ENCODE measurements at regions of chr12 and their contacts with region 1.

Region 1: DNA sequence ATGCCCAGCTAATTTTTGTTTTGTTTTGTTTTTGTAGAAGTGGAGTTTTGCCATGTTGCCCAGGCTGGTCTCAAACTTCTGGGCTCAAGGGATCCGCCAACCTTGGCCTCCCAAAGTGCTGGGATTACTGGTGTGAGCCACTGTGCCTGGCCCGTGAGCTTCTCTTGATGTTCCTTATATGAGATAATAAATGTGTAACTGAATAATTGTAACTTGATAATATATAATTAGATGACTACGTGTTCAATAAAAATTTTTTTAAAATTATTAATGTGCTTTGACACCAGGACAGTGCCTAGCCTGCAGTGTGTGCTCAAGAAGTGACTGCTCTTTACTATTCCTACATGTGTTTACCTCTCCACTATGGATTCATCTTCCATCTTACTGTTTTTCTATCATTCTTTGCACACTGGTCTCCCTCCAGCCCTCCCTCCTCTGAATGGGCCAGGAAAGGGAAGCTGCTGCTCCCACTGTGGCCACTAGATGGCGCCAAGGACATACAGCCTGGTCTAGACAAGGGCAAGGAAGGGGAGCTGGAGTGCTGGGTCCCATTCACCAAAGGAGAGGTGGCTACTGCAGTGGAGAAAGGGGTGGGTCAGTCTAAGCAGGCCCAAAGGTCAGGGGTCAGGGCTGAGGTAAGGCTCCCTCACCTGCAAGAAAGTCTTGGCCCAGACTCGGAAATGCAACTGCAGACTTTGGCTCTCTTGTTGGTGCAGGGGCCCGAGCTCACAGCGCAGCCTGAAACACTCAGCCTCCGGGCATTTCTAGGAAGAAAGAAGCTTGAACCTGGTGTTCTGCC is 14.7 kb upstream of the ZNF385A start:
- DNase-seq: peak; percentile 80 to 93 (median 88)
- ATAC-seq: peak; percentile 98
- H3K4me3 ChIP-seq: no peak overlapping the region
- H3K4me3 Mint-ChIP-seq: no peak overlapping the region
- H3K27ac ChIP-seq: no peak overlapping the region
- H3K27ac Mint-ChIP-seq: peak overlapping the region; percentile 4
- H3K4me1 ChIP-seq: peaks cover 13% of the 10 kb centered on the region
- H3K4me1 Mint-ChIP-seq: peaks cover 18% of the 10 kb centered on the region
- H3K27me3 ChIP-seq: no peaks in the 10 kb centered on the region
- H3K27me3 Mint-ChIP-seq: no peaks in the 10 kb centered on the region
- CTCF ChIP-seq: peak; percentile 97

Region 2: GRCh38 chr12:54249489-54249888 is 149.7 kb before region 1 on chr12:
- CTCF ChIA-PET with region 1: no interaction called
- POLR2A ChIA-PET with region 1: no interaction called
- intact Hi-C with region 1: no loop called
- DNase-seq: no peak
- ATAC-seq: peak; percentile 37
- H3K4me3 ChIP-seq: no peak overlapping the region
- H3K4me3 Mint-ChIP-seq: no peak overlapping the region
- H3K27ac ChIP-seq: no peak overlapping the region
- H3K27ac Mint-ChIP-seq: peak overlapping the region; percentile 73
- H3K4me1 ChIP-seq: no peaks in the 10 kb centered on the region
- H3K4me1 Mint-ChIP-seq: peaks cover 18% of the 10 kb centered on the region
- H3K27me3 ChIP-seq: no peaks in the 10 kb centered on the region
- H3K27me3 Mint-ChIP-seq: no peaks in the 10 kb centered on the region
- CTCF ChIP-seq: no peak

Region 3: DNA sequence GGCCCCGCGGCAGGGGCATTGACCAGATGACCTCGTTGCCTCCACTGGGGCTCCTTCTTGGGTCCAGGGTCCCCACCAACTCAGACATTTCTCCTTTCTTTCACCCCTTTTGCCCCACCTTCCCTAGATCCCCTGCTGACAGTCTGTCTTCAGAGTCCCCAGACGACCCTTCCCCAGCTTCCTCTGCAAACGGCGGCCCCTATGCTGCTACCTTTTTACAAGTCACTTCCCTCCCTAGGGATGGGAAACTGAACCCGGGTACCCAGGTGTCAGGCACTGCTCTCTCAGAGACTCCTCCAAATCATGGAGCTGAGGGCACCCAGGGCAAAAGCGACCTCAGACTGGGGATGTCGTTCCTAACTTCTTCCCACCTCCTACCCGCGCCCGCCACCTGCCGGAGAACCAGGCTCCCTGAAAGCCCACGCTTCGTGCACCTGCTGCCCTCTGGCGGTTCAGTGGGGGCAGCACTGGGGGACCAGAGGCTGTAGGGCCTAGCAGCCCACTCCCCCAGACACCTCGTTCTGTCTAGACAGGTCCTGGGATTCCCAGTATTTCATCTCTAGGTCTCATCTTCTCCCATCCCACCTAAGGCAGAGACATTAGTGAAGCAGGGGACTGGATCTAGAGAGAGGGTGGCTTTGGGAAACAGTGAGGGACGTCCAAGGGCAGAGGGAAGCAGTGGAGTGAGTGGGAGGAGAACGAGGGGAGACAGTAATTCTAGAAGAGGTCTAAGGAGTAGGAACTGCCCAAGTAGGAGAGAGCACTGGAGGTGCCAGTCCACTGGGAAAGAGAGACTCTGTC is 19.6 kb before region 1 on chr12:
- CTCF ChIA-PET with region 1: interaction called, 18 read pairs
- POLR2A ChIA-PET with region 1: no interaction called
- intact Hi-C with region 1: no loop called
- DNase-seq: peak; percentile 82 to 93 (median 87)
- ATAC-seq: peak; percentile 99
- H3K4me3 ChIP-seq: peak overlapping the region; percentile 34
- H3K4me3 Mint-ChIP-seq: peak overlapping the region; percentile 2
- H3K27ac ChIP-seq: no peak overlapping the region
- H3K27ac Mint-ChIP-seq: no peak overlapping the region
- H3K4me1 ChIP-seq: peaks cover 7% of the 10 kb centered on the region
- H3K4me1 Mint-ChIP-seq: peaks cover 6% of the 10 kb centered on the region
- H3K27me3 ChIP-seq: no peaks in the 10 kb centered on the region
- H3K27me3 Mint-ChIP-seq: no peaks in the 10 kb centered on the region
- CTCF ChIP-seq: peak; percentile 100

Region 4: GRCh38 chr12:54411391-54412241 is 12.4 kb after region 1 on chr12:
- CTCF ChIA-PET with region 1: interaction called, 147 read pairs
- POLR2A ChIA-PET with region 1: interaction called, 52 read pairs
- intact Hi-C with region 1: loop called in 1 of 2 experiments (anchors 2 kb)
- DNase-seq: peak in 13 of 14 experiments; percentile 45 to 83 (median 68)
- ATAC-seq: peak; percentile 46
- H3K4me3 ChIP-seq: peak overlapping the region; percentile 50
- H3K4me3 Mint-ChIP-seq: peak overlapping the region; percentile 78
- H3K27ac ChIP-seq: peak overlapping the region; percentile 94 to 99
- H3K27ac Mint-ChIP-seq: peak overlapping the region; percentile 95
- H3K4me1 ChIP-seq: peaks cover 91% of the 10 kb centered on the region
- H3K4me1 Mint-ChIP-seq: peaks cover 79% of the 10 kb centered on the region
- H3K27me3 ChIP-seq: no peaks in the 10 kb centered on the region
- H3K27me3 Mint-ChIP-seq: no peaks in the 10 kb centered on the region
- CTCF ChIP-seq: no peak

Region 5: GRCh38 chr12:54419088-54419892 is 20.1 kb after region 1 on chr12 and contains the start of gene ITGA5:
- CTCF ChIA-PET with region 1: interaction called, 147 read pairs
- POLR2A ChIA-PET with region 1: interaction called, 52 read pairs
- intact Hi-C with region 1: no loop called
- DNase-seq: peak in 8 of 14 experiments; percentile 25 to 72 (median 55)
- ATAC-seq: peak; percentile 25
- H3K4me3 ChIP-seq: peak within 1 kb of the TSS; percentile 98
- H3K4me3 Mint-ChIP-seq: peak within 1 kb of the TSS; percentile 94
- H3K27ac ChIP-seq: peak within 1 kb of the TSS; percentile 90 to 94
- H3K27ac Mint-ChIP-seq: peak within 1 kb of the TSS; percentile 95
- H3K4me1 ChIP-seq: peaks cover 55% of the 10 kb centered on the region
- H3K4me1 Mint-ChIP-seq: peaks cover 54% of the 10 kb centered on the region
- H3K27me3 ChIP-seq: no peaks in the 10 kb centered on the region
- H3K27me3 Mint-ChIP-seq: no peaks in the 10 kb centered on the region
- CTCF ChIP-seq: no peak
- total RNA-seq, gene ITGA5: 143 to 159 TPM

Region 6: DNA sequence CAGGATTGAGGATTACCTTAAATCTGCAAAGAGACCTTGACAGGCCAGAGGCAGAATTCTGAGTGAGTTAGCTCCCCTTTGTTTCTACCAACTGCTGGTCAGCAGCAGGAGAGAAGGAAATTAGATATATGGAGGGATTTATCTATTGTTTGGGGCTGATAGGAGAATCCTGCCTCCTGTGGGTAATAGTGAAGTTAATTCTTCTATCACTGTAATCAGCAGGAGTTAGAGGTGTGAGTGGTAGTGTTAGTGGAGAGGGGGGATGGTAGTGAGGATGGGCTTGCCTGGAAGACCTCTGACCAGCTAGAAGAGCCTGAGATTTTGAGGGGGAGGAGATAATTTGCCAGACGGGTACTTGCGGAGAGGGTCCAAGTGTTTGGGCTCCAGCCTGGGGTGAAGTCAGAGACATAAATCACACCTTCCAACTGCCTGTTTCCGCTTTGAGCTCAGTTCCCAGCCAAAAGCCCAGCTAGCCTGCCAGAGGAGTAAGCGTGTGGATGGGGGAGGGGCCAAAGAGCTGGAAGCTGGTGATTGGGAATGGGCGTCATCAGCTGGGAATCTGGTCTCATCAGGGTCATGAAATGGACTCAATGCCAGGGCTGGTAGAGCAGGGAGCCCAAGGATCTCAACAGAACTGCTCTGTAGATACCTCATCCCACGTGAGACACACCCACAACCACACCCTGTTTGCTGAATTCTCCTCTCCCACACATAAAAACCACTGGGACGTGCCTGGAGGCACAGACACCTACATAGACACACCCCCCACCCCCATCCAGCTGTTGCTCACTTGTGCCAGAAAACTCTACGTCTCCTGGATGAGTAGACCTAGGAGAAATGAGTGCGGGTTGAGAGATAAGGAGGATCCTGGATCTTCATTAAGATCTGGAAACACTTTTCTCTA is 33.0 kb after region 1 on chr12:
- CTCF ChIA-PET with region 1: interaction called, 153 read pairs
- POLR2A ChIA-PET with region 1: interaction called, 61 read pairs
- intact Hi-C with region 1: no loop called
- DNase-seq: no peak
- ATAC-seq: no peak
- H3K4me3 ChIP-seq: no peak overlapping the region
- H3K4me3 Mint-ChIP-seq: no peak overlapping the region
- H3K27ac ChIP-seq: no peak overlapping the region
- H3K27ac Mint-ChIP-seq: no peak overlapping the region
- H3K4me1 ChIP-seq: peaks cover 37% of the 10 kb centered on the region
- H3K4me1 Mint-ChIP-seq: peaks cover 47% of the 10 kb centered on the region
- H3K27me3 ChIP-seq: no peaks in the 10 kb centered on the region
- H3K27me3 Mint-ChIP-seq: no peaks in the 10 kb centered on the region
- CTCF ChIP-seq: no peak

Region 7: GRCh38 chr12:54439521-54440255 is 40.5 kb after region 1 on chr12:
- CTCF ChIA-PET with region 1: interaction called, 153 read pairs
- POLR2A ChIA-PET with region 1: interaction called, 61 read pairs
- intact Hi-C with region 1: loop called (anchors 1 kb)
- DNase-seq: peak in 3 of 14 experiments; percentile 61 to 76 (median 75)
- ATAC-seq: peak; percentile 97
- H3K4me3 ChIP-seq: no peak overlapping the region
- H3K4me3 Mint-ChIP-seq: no peak overlapping the region
- H3K27ac ChIP-seq: no peak overlapping the region
- H3K27ac Mint-ChIP-seq: no peak overlapping the region
- H3K4me1 ChIP-seq: peaks cover 4% of the 10 kb centered on the region
- H3K4me1 Mint-ChIP-seq: peaks cover 5% of the 10 kb centered on the region
- H3K27me3 ChIP-seq: no peaks in the 10 kb centered on the region
- H3K27me3 Mint-ChIP-seq: peaks cover 6% of the 10 kb centered on the region
- CTCF ChIP-seq: peak; percentile 87